GM12878 (cell line): ENCODE measurements at regions of chr6 and their contacts with region 1.

Region 1: DNA sequence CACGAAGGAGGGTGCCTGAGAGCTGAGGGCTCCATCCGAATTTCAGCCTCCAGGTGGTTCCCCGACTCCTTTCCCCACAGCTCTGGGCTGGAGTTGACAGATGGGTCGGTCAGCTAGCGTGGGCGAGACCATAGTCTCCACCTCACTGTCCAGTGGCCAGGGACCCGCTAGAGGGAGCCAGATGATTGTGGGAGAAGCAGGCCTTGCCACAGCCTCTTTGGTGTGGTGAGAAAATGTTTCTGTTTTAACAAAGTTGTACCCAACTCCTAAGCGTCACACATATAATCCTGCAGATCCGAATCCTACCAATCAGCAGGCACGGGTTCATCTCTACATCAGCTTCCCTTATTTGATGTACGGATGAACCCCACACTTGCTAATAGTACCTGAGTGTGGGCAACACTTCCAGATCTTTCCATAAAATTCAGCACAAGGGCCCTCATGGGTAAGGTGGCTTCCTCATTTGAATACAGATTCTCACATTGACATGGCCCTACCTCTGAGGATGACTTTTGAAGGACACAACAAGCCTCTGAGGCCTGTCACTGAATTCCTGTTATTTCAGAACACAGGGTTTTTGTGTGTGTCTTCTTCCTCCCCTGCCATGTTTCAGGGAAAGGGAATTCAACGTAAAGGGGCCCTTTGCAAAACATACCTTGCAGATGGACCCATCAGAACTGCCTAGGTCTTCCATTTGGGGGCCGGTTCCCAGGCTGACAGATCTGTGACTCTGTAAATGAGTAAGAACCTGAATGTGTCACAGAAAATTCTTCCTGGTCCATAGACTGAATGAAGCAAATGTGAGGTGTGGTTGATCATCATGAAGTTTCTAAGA is 103.2 kb upstream of the DUSP22 start:
- DNase-seq: peak; percentile 94
- ATAC-seq: peak; percentile 90
- H3K4me3 ChIP-seq: no peak overlapping the region
- H3K27ac ChIP-seq: peak overlapping the region; percentile 98
- H3K4me1 ChIP-seq: peaks cover 72% of the 10 kb centered on the region
- H3K27me3 ChIP-seq: no peaks in the 10 kb centered on the region; a peak in 1 of 4 replicates
- CTCF ChIP-seq: peak; percentile 93 to 96 (median 95)
- EP300 ChIP-seq: peak; percentile 44 to 58; a peak in 3 of 4 replicates
- POLR2A ChIP-seq: no peak
- RAD21 ChIP-seq: peak; percentile 97

Region 2: DNA sequence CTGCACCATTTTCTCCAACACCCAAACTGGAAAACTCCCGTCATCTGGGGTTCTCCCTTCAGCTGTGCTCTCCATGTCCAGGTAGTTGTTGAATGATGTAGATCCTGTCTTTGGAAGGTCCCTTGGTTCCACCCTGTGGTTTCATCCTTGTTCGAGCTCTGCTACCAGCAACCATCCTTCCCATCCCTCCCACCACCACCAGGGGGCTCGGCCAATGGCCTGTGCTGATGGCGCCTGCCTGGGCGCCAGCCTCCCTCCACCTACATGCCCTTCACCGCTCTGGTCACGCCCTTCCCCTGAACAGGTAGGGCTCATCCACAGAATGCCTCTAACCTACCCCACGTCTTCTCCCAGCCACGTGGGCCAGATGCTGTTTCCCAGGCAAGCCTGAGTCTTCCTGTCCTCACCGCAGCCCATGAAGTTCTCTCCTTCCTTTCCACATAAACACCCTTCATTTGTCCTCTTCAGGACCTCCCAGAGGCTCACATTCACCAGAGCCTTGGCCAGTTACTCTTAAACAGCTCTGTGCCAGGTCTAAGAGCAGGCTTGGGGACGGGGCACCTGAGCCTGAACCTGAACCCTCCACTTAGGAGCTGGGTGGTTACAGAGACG is 28.1 kb after region 1 on chr6:
- CTCF ChIA-PET with region 1: interaction called, 460 read pairs
- POLR2A ChIA-PET with region 1: interaction called, 139 read pairs
- RAD21 ChIA-PET with region 1: interaction called, 519 read pairs
- SMC1A ChIA-PET with region 1: interaction called, 748 read pairs
- in situ Hi-C with region 1: no loop called
- intact Hi-C with region 1: loop called (anchors 1 kb)
- DNase-seq: peak; percentile 55
- ATAC-seq: 0 out of 3 replicates have a peak, but pooled peaks have one; percentile 1
- H3K4me3 ChIP-seq: peak overlapping the region; percentile 13; the same call in 1 of the 2 replicates
- H3K27ac ChIP-seq: peak overlapping the region; percentile 94
- H3K4me1 ChIP-seq: peaks cover 86% of the 10 kb centered on the region
- H3K27me3 ChIP-seq: no peaks in the 10 kb centered on the region
- CTCF ChIP-seq: peak; percentile 57 to 73 (median 73)
- EP300 ChIP-seq: no peak
- POLR2A ChIP-seq: no peak
- RAD21 ChIP-seq: peak; percentile 54

Region 3: GRCh38 chr6:305371-306206 is 116.6 kb after region 1 on chr6:
- CTCF ChIA-PET with region 1: interaction called, 7 read pairs
- POLR2A ChIA-PET with region 1: no interaction called
- RAD21 ChIA-PET with region 1: interaction called, 20 read pairs
- SMC1A ChIA-PET with region 1: interaction called, 8 read pairs
- in situ Hi-C with region 1: no loop called
- intact Hi-C with region 1: no loop called
- DNase-seq: peak; percentile 97
- ATAC-seq: peak; percentile 84
- H3K4me3 ChIP-seq: peak overlapping the region; percentile 26; the same call in 1 of the 2 replicates
- H3K27ac ChIP-seq: peak overlapping the region; percentile 100
- H3K4me1 ChIP-seq: peaks cover 77% of the 10 kb centered on the region
- H3K27me3 ChIP-seq: no peaks in the 10 kb centered on the region
- CTCF ChIP-seq: no peak
- EP300 ChIP-seq: peak; percentile 100
- POLR2A ChIP-seq: no peak
- RAD21 ChIP-seq: peak; percentile 30; the same call in 1 of the 2 replicates

Region 4: GRCh38 chr6:364609-365540 is 175.8 kb after region 1 on chr6:
- CTCF ChIA-PET with region 1: interaction called, 11 read pairs
- POLR2A ChIA-PET with region 1: no interaction called
- RAD21 ChIA-PET with region 1: interaction called, 3 read pairs
- SMC1A ChIA-PET with region 1: interaction called, 3 read pairs
- in situ Hi-C with region 1: no loop called
- intact Hi-C with region 1: no loop called
- DNase-seq: peak; percentile 78
- ATAC-seq: peak; percentile 94
- H3K4me3 ChIP-seq: no peak overlapping the region
- H3K27ac ChIP-seq: peak overlapping the region; percentile 33
- H3K4me1 ChIP-seq: peaks cover 25% of the 10 kb centered on the region
- H3K27me3 ChIP-seq: no peaks in the 10 kb centered on the region
- CTCF ChIP-seq: no peak
- EP300 ChIP-seq: peak; percentile 37 to 88; a peak in 2 of 4 replicates
- POLR2A ChIP-seq: no peak
- RAD21 ChIP-seq: 0 out of 2 replicates have a peak, but pooled peaks have one; percentile 2

Region 5: GRCh38 chr6:408599-409102 is 219.6 kb after region 1 on chr6:
- CTCF ChIA-PET with region 1: interaction called, 7 read pairs
- POLR2A ChIA-PET with region 1: interaction called, 3 read pairs
- RAD21 ChIA-PET with region 1: interaction called, 16 read pairs
- SMC1A ChIA-PET with region 1: interaction called, 13 read pairs
- in situ Hi-C with region 1: no loop called
- intact Hi-C with region 1: no loop called
- DNase-seq: no peak
- ATAC-seq: no peak
- H3K4me3 ChIP-seq: no peak overlapping the region
- H3K27ac ChIP-seq: no peak overlapping the region
- H3K4me1 ChIP-seq: no peaks in the 10 kb centered on the region; the same call in 1 of the 2 replicates
- H3K27me3 ChIP-seq: no peaks in the 10 kb centered on the region
- CTCF ChIP-seq: peak; percentile 22 to 28 (median 24); a peak in 3 of 6 replicates
- EP300 ChIP-seq: no peak
- POLR2A ChIP-seq: peak; percentile 89
- RAD21 ChIP-seq: peak; percentile 47

Region 6: GRCh38 chr6:710601-711571 is 521.8 kb after region 1 on chr6:
- CTCF ChIA-PET with region 1: no interaction called
- POLR2A ChIA-PET with region 1: no interaction called
- RAD21 ChIA-PET with region 1: no interaction called
- SMC1A ChIA-PET with region 1: interaction called, 3 read pairs
- in situ Hi-C with region 1: no loop called
- intact Hi-C with region 1: loop called (anchors 5 kb)
- DNase-seq: peak; percentile 66
- ATAC-seq: peak; percentile 95
- H3K4me3 ChIP-seq: peak overlapping the region; percentile 70
- H3K27ac ChIP-seq: peak overlapping the region; percentile 94
- H3K4me1 ChIP-seq: peaks cover 8% of the 10 kb centered on the region
- H3K27me3 ChIP-seq: no peaks in the 10 kb centered on the region
- CTCF ChIP-seq: no peak
- EP300 ChIP-seq: no peak
- POLR2A ChIP-seq: peak; percentile 77
- RAD21 ChIP-seq: no peak

Region 7: GRCh38 chr6:1893470-1894130 is 1704.6 kb after region 1 on chr6:
- CTCF ChIA-PET with region 1: no interaction called
- POLR2A ChIA-PET with region 1: no interaction called
- RAD21 ChIA-PET with region 1: no interaction called
- SMC1A ChIA-PET with region 1: no interaction called
- in situ Hi-C with region 1: no loop called
- intact Hi-C with region 1: no loop called
- DNase-seq: no peak
- ATAC-seq: no peak
- H3K4me3 ChIP-seq: no peak overlapping the region
- H3K27ac ChIP-seq: no peak overlapping the region
- H3K4me1 ChIP-seq: no peaks in the 10 kb centered on the region
- H3K27me3 ChIP-seq: no peaks in the 10 kb centered on the region
- CTCF ChIP-seq: peak in 1 of 3 experiments; percentile 7; a peak in 1 of 6 replicates
- EP300 ChIP-seq: no peak
- POLR2A ChIP-seq: no peak
- RAD21 ChIP-seq: peak; percentile 27; the same call in 1 of the 2 replicates